ENCODE measurements at regions of chr5 and their contacts with region 1.

Region 1: DNA sequence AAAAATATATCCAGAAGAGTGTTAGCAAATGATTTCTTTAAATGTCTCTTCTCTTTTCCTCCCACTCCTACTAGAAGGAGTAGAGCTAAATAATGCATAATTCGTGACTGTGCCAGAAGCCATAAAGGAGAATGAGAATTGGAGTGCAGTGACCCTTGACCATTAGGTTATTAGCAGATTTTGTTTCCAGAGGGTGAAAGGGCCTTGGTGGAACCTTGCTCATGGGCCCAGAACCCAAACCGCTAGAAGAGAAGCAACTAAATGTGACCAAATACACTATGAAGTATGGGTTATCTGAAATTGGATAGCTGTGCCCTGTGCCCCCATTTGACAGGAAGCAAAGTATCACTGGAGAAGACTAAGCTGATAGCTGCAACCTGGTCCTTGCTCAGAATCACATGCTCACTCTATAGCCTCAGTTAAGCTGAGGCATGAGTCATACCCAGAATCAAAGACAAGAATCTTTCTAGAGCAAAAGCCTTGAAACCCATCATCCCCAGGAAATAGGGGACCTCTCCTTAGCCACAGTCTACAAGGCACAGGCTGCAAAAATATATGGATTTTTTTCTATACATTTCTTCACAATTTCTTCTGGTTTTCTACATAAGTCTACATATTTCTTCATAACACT is 36.3 kb downstream of the CAPSL start:
- DNase-seq: peak; percentile 52
- H3K4me3 Mint-ChIP-seq: peak overlapping the region; percentile 9
- H3K27ac Mint-ChIP-seq: peak overlapping the region; percentile 71
- H3K4me1 Mint-ChIP-seq: peaks cover 77% of the 10 kb centered on the region
- H3K27me3 Mint-ChIP-seq: no peaks in the 10 kb centered on the region

Region 2: GRCh38 chr5:35857606-35858205 is 44.5 kb before region 1 on chr5:
- CTCF ChIA-PET with region 1: interaction called, 6 read pairs
- POLR2A ChIA-PET with region 1: interaction called, 20 read pairs
- DNase-seq: no peak
- H3K4me3 Mint-ChIP-seq: peak overlapping the region; percentile 76
- H3K27ac Mint-ChIP-seq: peak overlapping the region; percentile 82
- H3K4me1 Mint-ChIP-seq: peaks cover 87% of the 10 kb centered on the region
- H3K27me3 Mint-ChIP-seq: no peaks in the 10 kb centered on the region

Region 3: DNA sequence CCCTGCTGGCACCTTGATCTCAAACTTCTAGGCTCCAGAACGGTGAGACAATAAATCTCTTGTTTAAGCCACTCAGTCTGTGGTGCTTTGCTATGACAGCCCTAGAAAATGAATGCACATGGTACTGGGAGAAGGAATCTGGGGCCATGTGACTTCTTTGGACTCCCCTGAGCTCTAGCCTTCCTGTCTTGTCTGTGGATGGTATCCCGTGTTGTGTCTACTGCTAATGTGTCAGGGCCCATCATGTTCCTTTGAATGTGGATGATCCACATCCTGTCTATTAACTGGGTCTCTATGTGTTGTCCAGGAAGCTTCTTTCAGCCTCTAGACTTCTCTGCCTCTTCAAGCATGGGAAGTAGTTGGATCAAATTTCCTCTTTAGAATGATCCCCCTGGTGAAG is 20.4 kb before region 1 on chr5:
- CTCF ChIA-PET with region 1: interaction called, 4 read pairs
- POLR2A ChIA-PET with region 1: interaction called, 13 read pairs
- DNase-seq: no peak
- H3K4me3 Mint-ChIP-seq: no peak overlapping the region
- H3K27ac Mint-ChIP-seq: no peak overlapping the region
- H3K4me1 Mint-ChIP-seq: peaks cover 63% of the 10 kb centered on the region
- H3K27me3 Mint-ChIP-seq: no peaks in the 10 kb centered on the region